ENCODE measurements at regions of chr7 and their contacts with region 1.

Region 1: GRCh38 chr7:98021588-98022351 is 31.8 kb upstream of the OCM2 start:
- DNase-seq: peak; percentile 94
- H3K4me3 ChIP-seq: no peak overlapping the region
- H3K27ac ChIP-seq: no peak overlapping the region
- H3K4me1 ChIP-seq: peaks cover 0 to 8% (median 2%) of the 10 kb centered on the region in 6 donors
- H3K27me3 ChIP-seq: peaks cover 0 to 45% (median 0%) of the 10 kb centered on the region in 7 donors
- CTCF ChIP-seq: peak; percentile 78 to 96 (median 90)
- POLR2A ChIP-seq: no peak

Region 2: GRCh38 chr7:98168181-98168905 is 146.6 kb after region 1 on chr7:
- intact Hi-C with region 1: loop called (anchors 2 kb)
- DNase-seq: peak; percentile 78
- H3K4me3 ChIP-seq: no peak overlapping the region
- H3K27ac ChIP-seq: no peak overlapping the region
- H3K4me1 ChIP-seq: peaks cover 0 to 57% (median 33%) of the 10 kb centered on the region in 6 donors
- H3K27me3 ChIP-seq: no peaks in the 10 kb centered on the region
- CTCF ChIP-seq: peak; percentile 45 to 85 (median 71)
- POLR2A ChIP-seq: no peak

Region 3: GRCh38 chr7:98238976-98239375 is 217.2 kb after region 1 on chr7:
- intact Hi-C with region 1: loop called (anchors 10 kb)
- DNase-seq: no peak
- H3K4me3 ChIP-seq: no peak overlapping the region
- H3K27ac ChIP-seq: no peak overlapping the region
- H3K4me1 ChIP-seq: no peaks in the 10 kb centered on the region
- H3K27me3 ChIP-seq: no peaks in the 10 kb centered on the region
- CTCF ChIP-seq: no peak
- POLR2A ChIP-seq: no peak